Esophagus muscularis mucosa (tissue), 4 donors: ENCODE measurements at regions of chr20 and their contacts with region 1.

Region 1: GRCh38 chr20:52083627-52084232 is 107.8 kb downstream of the ZFP64 start:
- DNase-seq: no peak
- H3K4me3 ChIP-seq: no peak overlapping the region
- H3K27ac ChIP-seq: no peak overlapping the region
- H3K4me1 ChIP-seq: no peaks in the 10 kb centered on the region
- H3K27me3 ChIP-seq: no peaks in the 10 kb centered on the region
- CTCF ChIP-seq: peak; percentile 49 to 56 (median 50)
- EP300 ChIP-seq: no peak
- POLR2A ChIP-seq: no peak

Region 2: DNA sequence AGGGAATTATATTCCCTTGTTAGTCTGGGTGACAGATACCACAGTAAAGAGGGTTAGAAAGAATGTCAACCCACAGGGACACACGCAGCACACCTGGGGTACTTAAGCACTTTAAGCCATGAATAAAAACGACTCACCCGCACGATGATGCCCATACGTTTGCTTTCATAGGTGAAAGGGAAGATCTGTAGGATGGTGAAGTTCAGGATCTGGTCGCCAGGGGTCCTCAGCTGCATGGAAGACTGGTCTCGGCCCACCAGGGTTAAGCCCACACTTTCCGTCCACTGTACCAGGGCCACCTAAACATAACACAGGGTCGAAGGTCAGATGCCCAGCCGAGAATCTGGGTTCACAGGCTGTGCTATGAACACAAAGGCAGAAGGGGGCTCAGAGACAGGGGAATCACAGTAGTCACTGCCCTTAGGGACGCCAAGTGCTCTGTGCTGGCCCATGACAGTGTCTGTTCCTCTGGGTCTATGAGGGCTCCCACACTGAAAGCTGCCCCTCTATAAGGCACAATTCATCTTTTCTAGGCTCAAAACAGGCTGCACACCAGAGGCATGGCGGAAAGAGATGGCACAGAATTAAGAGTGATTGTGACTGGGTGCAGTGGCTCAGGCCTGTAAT is 444.4 kb before region 1 on chr20:
- intact Hi-C with region 1: loop called (anchors 5 kb)
- DNase-seq: no peak
- H3K4me3 ChIP-seq: no peak overlapping the region
- H3K27ac ChIP-seq: no peak overlapping the region
- H3K4me1 ChIP-seq: peaks cover 0 to 6% (median 3%) of the 10 kb centered on the region in 4 donors
- H3K27me3 ChIP-seq: no peaks in the 10 kb centered on the region
- CTCF ChIP-seq: peak; percentile 70 to 84 (median 75)
- EP300 ChIP-seq: no peak
- POLR2A ChIP-seq: no peak

Region 3: DNA sequence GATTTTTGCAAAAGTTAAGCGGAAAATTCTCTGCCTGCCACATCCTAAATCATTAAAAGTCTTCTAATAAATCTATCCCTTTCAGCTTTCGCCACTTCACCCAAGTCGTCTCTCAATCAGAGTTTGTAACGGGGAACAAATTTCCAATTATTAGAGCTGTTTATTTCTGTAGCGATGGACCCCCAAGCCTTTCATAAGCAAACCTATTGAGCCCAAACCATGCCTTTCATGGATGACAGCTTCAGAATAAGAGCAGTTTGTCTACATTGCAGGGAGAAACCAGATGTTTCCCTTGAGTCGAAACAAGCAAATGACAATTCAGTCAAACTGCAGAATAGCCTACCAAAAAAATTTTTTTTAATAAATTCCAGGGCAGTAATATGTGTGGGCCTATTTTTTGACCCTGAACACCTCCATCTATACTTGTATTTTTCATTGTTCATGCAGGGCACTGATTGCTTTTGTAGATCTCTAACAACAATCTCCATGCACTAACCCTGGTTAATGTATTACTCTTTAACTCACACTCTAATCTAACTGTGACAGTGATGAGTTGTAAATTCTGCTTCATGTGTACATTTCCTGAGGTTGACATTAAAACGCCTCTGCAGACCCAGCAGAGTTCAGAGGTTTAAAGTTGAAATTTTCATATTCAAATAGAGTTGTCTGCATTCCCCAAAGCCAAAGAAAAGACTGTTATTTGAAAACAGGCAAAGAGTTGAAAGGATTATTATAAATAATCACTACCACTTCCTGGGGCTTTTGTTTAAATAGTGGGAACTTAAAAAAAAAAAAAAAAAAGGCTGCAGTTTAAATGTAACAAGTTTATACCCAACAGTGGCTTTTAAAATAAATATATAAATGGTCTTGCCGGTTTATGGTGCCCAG is 380.1 kb before region 1 on chr20:
- intact Hi-C with region 1: loop called (anchors 10 kb)
- DNase-seq: no peak
- H3K4me3 ChIP-seq: no peak overlapping the region
- H3K27ac ChIP-seq: no peak overlapping the region
- H3K4me1 ChIP-seq: peaks cover 0 to 6% (median 2%) of the 10 kb centered on the region in 4 donors
- H3K27me3 ChIP-seq: no peaks in the 10 kb centered on the region
- CTCF ChIP-seq: no peak
- EP300 ChIP-seq: no peak
- POLR2A ChIP-seq: no peak

Region 4: GRCh38 chr20:51797357-51798028 is 286.2 kb before region 1 on chr20:
- intact Hi-C with region 1: loop called (anchors 5 kb)
- DNase-seq: no peak
- H3K4me3 ChIP-seq: no peak overlapping the region
- H3K27ac ChIP-seq: no peak overlapping the region
- H3K4me1 ChIP-seq: peaks cover 17 to 30% (median 26%) of the 10 kb centered on the region in 4 donors
- H3K27me3 ChIP-seq: peaks cover 0 to 56% (median 27%) of the 10 kb centered on the region in 4 donors
- CTCF ChIP-seq: no peak
- EP300 ChIP-seq: no peak
- POLR2A ChIP-seq: no peak